Posterior vena cava (tissue), 2 donors: ENCODE measurements at regions of chr3 and their contacts with region 1.

Region 1: GRCh38 chr3:18338827-18339514 is 86.2 kb downstream of the SATB1 start:
- DNase-seq: no peak

Region 2: GRCh38 chr3:18351823-18352744 is 13.1 kb after region 1 on chr3:
- intact Hi-C with region 1: loop called in 1 of 2 experiments (anchors 1 kb)
- DNase-seq: no peak